ENCODE measurements at regions of chr4 and their contacts with region 1.

Region 1: GRCh38 chr4:81405894-81406401 is 65.8 kb downstream of the RASGEF1B start:
- DNase-seq: peak; percentile 69
- H3K4me3 ChIP-seq: peak overlapping the region; percentile 1
- H3K27ac ChIP-seq: no peak overlapping the region
- H3K4me1 ChIP-seq: no peaks in the 10 kb centered on the region
- H3K27me3 ChIP-seq: no peaks in the 10 kb centered on the region
- CTCF ChIP-seq: peak; percentile 66

Region 2: GRCh38 chr4:81638698-81639097 is 232.8 kb after region 1 on chr4:
- intact Hi-C with region 1: no loop called
- DNase-seq: no peak
- H3K4me3 ChIP-seq: no peak overlapping the region
- H3K27ac ChIP-seq: no peak overlapping the region
- H3K4me1 ChIP-seq: no peaks in the 10 kb centered on the region
- H3K27me3 ChIP-seq: no peaks in the 10 kb centered on the region
- CTCF ChIP-seq: no peak

Region 3: DNA sequence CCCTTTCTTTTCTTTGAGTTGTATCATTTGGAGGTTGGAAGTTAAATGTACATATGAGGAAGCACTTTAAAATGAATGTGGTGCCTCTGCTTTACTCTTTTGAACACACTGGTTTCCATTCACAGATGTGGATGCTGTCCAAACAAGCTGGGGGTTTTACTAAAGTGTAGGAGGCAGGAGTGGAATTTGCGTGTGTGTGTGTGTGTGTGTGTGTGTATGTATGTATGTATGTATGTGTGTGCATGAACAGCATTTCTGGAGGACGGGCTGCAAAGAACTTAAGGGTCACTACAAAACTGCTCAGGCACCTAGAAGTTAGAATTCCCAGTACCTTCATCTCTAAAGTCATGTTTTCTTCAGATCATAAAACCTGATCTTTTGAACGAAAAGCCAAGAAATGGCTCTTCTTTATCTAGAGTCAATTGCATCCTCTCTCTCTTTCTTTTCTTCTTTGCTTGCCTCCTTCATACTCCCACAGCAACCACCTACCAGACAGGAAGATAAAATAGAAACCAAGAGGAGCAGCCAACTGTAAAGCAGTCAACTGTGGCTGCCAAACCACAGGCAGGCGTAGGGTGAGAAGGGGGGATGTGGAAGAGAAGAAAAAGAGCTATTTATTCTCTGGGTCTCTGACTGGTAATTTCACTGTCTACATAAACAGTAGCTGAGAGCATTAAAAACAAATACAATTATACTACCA is 242.8 kb after region 1 on chr4:
- intact Hi-C with region 1: no loop called
- DNase-seq: no peak
- H3K4me3 ChIP-seq: no peak overlapping the region
- H3K27ac ChIP-seq: no peak overlapping the region
- H3K4me1 ChIP-seq: no peaks in the 10 kb centered on the region
- H3K27me3 ChIP-seq: no peaks in the 10 kb centered on the region
- CTCF ChIP-seq: no peak

Region 4: GRCh38 chr4:81676537-81676936 is 270.6 kb after region 1 on chr4:
- intact Hi-C with region 1: no loop called
- DNase-seq: peak; percentile 48
- H3K4me3 ChIP-seq: no peak overlapping the region
- H3K27ac ChIP-seq: no peak overlapping the region
- H3K4me1 ChIP-seq: no peaks in the 10 kb centered on the region
- H3K27me3 ChIP-seq: no peaks in the 10 kb centered on the region
- CTCF ChIP-seq: no peak

Region 5: DNA sequence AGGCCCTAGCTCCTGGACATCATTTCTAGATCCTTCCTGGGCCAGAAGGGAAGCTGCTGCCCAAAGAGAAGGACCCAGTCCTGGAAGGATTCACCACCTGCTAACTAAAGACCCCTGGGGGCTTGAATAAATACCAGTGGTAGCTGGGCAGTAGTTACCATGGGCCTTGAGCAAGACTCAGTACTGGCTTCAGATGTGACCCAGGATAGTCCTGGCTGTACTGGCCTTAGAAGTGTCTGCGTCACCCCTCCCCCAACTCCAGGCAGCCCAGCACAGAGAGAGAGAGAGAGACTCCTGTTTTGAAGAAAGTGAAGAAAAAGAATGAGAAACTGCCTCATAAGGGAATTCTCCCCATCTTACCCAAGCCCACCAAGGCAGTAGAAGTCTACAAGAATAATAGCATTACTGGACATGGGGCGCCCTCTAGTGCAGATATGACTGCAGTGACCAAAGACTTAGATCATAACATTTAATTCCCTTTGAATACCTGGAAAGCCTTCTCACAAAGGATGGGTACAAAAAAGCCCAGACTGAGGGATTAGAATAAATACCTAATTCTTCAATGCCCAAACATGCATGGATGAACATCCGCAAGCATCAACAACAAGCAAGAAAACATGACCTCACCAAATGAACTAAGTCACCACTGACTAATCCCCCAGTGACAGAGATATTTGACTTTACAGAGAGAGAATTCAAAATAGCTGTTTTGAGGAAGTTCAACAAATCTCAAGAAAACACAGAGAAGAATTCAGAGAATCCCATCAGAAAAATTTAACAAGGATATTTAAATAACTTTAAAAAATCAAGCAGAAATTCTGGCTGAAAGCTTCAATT is 796.1 kb after region 1 on chr4:
- intact Hi-C with region 1: loop called (anchors 2 kb)
- DNase-seq: peak; percentile 42
- H3K4me3 ChIP-seq: no peak overlapping the region
- H3K27ac ChIP-seq: no peak overlapping the region
- H3K4me1 ChIP-seq: no peaks in the 10 kb centered on the region
- H3K27me3 ChIP-seq: no peaks in the 10 kb centered on the region
- CTCF ChIP-seq: peak; percentile 46

Region 6: GRCh38 chr4:82268050-82268825 is 862.3 kb after region 1 on chr4:
- intact Hi-C with region 1: loop called (anchors 5 kb)
- DNase-seq: peak; percentile 46
- H3K4me3 ChIP-seq: no peak overlapping the region
- H3K27ac ChIP-seq: no peak overlapping the region
- H3K4me1 ChIP-seq: no peaks in the 10 kb centered on the region
- H3K27me3 ChIP-seq: no peaks in the 10 kb centered on the region
- CTCF ChIP-seq: peak; percentile 58